ENCODE measurements at regions of chr13 and their contacts with region 1.

Region 1: GRCh38 chr13:97798836-97799235 is 154.6 kb upstream of the IPO5 start:
- DNase-seq: no peak
- ATAC-seq: peak; percentile 57

Region 2: DNA sequence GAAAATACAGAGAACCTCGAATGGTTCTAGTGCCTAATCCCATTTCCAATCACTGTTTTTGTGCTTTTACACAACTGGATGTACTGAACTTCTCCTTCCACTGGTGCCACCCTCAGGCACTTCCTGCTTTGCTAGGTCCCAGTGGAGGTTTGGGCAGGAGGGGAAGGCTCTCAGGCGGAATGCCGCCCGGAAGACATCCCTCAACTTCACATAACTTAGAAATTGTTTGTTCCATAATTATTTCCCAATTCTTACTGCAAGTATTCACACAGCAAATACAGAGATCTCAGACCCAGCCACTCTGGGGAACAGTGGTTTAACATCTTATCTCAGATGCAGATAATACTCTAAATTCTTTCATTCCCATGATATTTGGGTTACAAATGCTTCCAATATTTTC is 41.0 kb before region 1 on chr13:
- intact Hi-C with region 1: loop called (anchors 1 kb)
- DNase-seq: peak; percentile 80
- ATAC-seq: peak; percentile 92

Region 3: GRCh38 chr13:97879646-97880310 is 80.9 kb after region 1 on chr13:
- intact Hi-C with region 1: no loop called
- DNase-seq: no peak
- ATAC-seq: peak; percentile 45

Measured in Right ventricle myocardium inferior (tissue), 1 donor.